ENCODE measurements at regions of chr3 and their contacts with region 1.

Region 1: GRCh38 chr3:151146071-151146730 is 56.8 kb downstream of the GPR171 start:
- DNase-seq: peak; percentile 77
- H3K4me3 Mint-ChIP-seq: no peak overlapping the region
- H3K27ac Mint-ChIP-seq: no peak overlapping the region
- H3K4me1 Mint-ChIP-seq: no peaks in the 10 kb centered on the region
- H3K27me3 Mint-ChIP-seq: no peaks in the 10 kb centered on the region

Region 2: GRCh38 chr3:150528354-150528797 is 617.8 kb before region 1 on chr3:
- CTCF ChIA-PET with region 1: interaction called, 3 read pairs
- intact Hi-C with region 1: loop called (anchors 1 kb)
- DNase-seq: no peak
- H3K4me3 Mint-ChIP-seq: no peak overlapping the region
- H3K27ac Mint-ChIP-seq: no peak overlapping the region
- H3K4me1 Mint-ChIP-seq: peaks cover 8% of the 10 kb centered on the region
- H3K27me3 Mint-ChIP-seq: no peaks in the 10 kb centered on the region

Region 3: GRCh38 chr3:150870396-150870795 is 275.8 kb before region 1 on chr3:
- CTCF ChIA-PET with region 1: no interaction called
- intact Hi-C with region 1: loop called (anchors 5 kb)
- DNase-seq: no peak
- H3K4me3 Mint-ChIP-seq: no peak overlapping the region
- H3K27ac Mint-ChIP-seq: no peak overlapping the region
- H3K4me1 Mint-ChIP-seq: no peaks in the 10 kb centered on the region
- H3K27me3 Mint-ChIP-seq: peaks cover 6% of the 10 kb centered on the region

Region 4: GRCh38 chr3:150925751-150926201 is 220.4 kb before region 1 on chr3:
- CTCF ChIA-PET with region 1: interaction called, 11 read pairs
- intact Hi-C with region 1: loop called (anchors 1 kb)
- DNase-seq: peak; percentile 72
- H3K4me3 Mint-ChIP-seq: peak overlapping the region; percentile 39
- H3K27ac Mint-ChIP-seq: no peak overlapping the region
- H3K4me1 Mint-ChIP-seq: peaks cover 4% of the 10 kb centered on the region
- H3K27me3 Mint-ChIP-seq: peaks cover 5% of the 10 kb centered on the region

Region 5: DNA sequence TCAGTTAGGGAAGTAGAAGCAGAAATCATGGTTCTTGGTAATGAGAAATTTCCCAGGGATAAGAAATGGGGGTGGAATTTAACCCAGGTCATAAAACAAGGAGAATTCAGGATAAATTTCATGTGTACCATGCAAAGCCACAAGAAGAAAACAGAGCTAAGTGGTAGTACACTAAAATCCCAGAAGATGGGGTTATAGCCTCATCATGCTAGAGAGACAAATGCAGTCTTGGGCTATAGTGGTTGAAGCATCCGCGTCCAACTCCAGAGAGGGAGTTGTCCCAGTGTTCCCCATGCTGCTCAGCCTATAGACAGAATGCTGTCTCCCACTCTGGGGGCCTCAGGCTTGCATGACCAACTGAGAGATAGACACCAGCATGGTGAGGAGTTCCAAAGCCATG is 137.5 kb before region 1 on chr3:
- CTCF ChIA-PET with region 1: interaction called, 3 read pairs
- intact Hi-C with region 1: loop called (anchors 2 kb)
- DNase-seq: no peak
- H3K4me3 Mint-ChIP-seq: no peak overlapping the region
- H3K27ac Mint-ChIP-seq: no peak overlapping the region
- H3K4me1 Mint-ChIP-seq: no peaks in the 10 kb centered on the region
- H3K27me3 Mint-ChIP-seq: no peaks in the 10 kb centered on the region

Region 6: GRCh38 chr3:151067158-151067557 is 79.0 kb before region 1 on chr3:
- CTCF ChIA-PET with region 1: interaction called, 7 read pairs
- intact Hi-C with region 1: loop called (anchors 1 kb)
- DNase-seq: peak; percentile 10
- H3K4me3 Mint-ChIP-seq: no peak overlapping the region
- H3K27ac Mint-ChIP-seq: no peak overlapping the region
- H3K4me1 Mint-ChIP-seq: no peaks in the 10 kb centered on the region
- H3K27me3 Mint-ChIP-seq: peaks cover 9% of the 10 kb centered on the region

Region 7: DNA sequence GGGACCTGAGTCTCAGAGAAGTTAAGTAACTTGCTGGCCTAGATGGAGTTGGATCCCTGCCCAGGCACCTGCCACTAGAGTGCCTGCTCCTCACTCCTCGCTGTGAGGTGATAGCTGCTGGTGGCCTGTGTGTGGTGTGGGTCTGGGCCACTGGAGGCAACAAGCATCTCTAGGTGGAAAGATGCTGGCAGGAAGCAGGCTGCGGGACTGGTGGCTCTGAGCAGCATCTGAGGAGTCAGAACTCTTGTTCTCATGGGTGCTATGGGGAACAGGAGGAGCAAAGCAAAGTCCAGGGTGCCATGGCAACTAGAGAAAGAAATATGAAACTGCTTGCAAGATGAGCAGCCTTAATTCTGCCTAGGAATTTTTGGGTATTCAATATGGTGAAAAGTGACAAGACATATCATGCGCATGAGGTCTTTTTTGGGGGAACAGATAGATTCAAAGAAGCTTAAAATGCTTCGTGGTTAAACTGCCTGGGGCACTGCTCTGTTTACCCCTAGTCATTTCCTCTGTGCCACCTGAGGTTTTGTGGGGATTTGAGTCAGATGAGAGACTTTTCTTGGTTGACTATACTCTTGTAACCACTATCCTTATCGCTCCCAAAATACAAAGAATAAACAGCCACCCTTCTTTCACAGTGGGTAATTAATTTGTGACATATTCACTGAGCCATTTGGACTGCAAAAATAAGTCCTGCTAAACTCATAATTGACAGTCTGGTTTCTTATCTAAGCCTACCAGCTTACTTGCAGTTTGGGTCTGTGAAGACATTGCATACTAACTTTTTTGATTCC is 10.5 kb before region 1 on chr3:
- CTCF ChIA-PET with region 1: interaction called, 13 read pairs
- intact Hi-C with region 1: no loop called
- DNase-seq: peak; percentile 71
- H3K4me3 Mint-ChIP-seq: no peak overlapping the region
- H3K27ac Mint-ChIP-seq: peak overlapping the region; percentile 48
- H3K4me1 Mint-ChIP-seq: peaks cover 21% of the 10 kb centered on the region
- H3K27me3 Mint-ChIP-seq: peaks cover 10% of the 10 kb centered on the region

Region 8: GRCh38 chr3:151593928-151594327 is 447.7 kb after region 1 on chr3:
- CTCF ChIA-PET with region 1: no interaction called
- intact Hi-C with region 1: no loop called
- DNase-seq: no peak
- H3K4me3 Mint-ChIP-seq: no peak overlapping the region
- H3K27ac Mint-ChIP-seq: no peak overlapping the region
- H3K4me1 Mint-ChIP-seq: no peaks in the 10 kb centered on the region
- H3K27me3 Mint-ChIP-seq: no peaks in the 10 kb centered on the region